Activated CD4-positive, alpha-beta T cell treated with anti-CD3 and anti-CD28 coated beads for 36 hours (primary cell): ENCODE measurements at regions of chr12 and their contacts with region 1.

Region 1: DNA sequence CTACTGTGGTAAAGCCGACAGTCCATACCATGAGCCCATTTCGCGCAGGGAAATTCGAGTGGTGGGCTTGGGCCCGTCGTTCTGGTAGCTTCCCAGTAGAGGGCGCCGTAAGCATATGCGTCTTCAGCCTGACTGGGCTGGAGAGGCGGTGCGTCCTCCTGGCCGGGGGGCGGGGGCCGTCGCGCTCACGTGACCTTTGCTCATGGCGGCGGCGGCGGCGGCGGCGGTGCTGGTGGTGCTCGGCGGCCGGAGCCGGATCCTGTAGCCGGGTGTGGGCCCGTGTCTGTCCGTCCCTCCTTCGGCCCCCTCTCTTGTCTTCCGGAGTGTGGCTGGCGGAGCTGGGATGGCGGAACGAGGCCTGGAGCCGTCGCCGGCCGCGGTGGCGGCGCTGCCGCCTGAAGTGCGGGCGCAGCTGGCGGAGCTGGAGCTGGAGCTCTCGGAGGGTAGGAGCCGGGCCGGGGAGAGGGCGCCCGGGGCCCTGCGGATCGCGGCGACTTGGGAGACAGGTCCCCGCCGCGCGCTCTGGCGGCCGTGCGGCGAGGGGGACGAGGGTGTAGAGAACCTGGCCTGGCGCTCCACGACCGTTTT is at the start of gene DIP2B:
- DNase-seq: peak; percentile 98
- ATAC-seq: peak; percentile 85
- H3K4me3 Mint-ChIP-seq: peak within 1 kb of the TSS; percentile 98
- H3K27ac Mint-ChIP-seq: peak within 1 kb of the TSS; percentile 96
- H3K4me1 Mint-ChIP-seq: peaks cover 43% of the 10 kb centered on the region
- H3K27me3 Mint-ChIP-seq: no peaks in the 10 kb centered on the region
- total RNA-seq, gene DIP2B: 29.2 to 29.4 TPM

Region 2: GRCh38 chr12:50400598-50401364 is 104.1 kb before region 1 on chr12 and contains the start of gene LARP4:
- CTCF ChIA-PET with region 1: no interaction called
- POLR2A ChIA-PET with region 1: no interaction called
- intact Hi-C with region 1: no loop called
- DNase-seq: peak; percentile 95
- ATAC-seq: peak; percentile 97
- H3K4me3 Mint-ChIP-seq: peak within 1 kb of the TSS; percentile 93
- H3K27ac Mint-ChIP-seq: peak within 1 kb of the TSS; percentile 94
- H3K4me1 Mint-ChIP-seq: peaks cover 13% of the 10 kb centered on the region
- H3K27me3 Mint-ChIP-seq: no peaks in the 10 kb centered on the region
- total RNA-seq, gene LARP4: 66.3 to 72.4 TPM

Region 3: GRCh38 chr12:50517456-50518048 is 12.7 kb after region 1 on chr12:
- CTCF ChIA-PET with region 1: interaction called, 9 read pairs
- POLR2A ChIA-PET with region 1: interaction called, 11 read pairs
- intact Hi-C with region 1: loop called (anchors 1 kb)
- DNase-seq: no peak
- ATAC-seq: peak; percentile 89
- H3K4me3 Mint-ChIP-seq: no peak overlapping the region
- H3K27ac Mint-ChIP-seq: no peak overlapping the region
- H3K4me1 Mint-ChIP-seq: peaks cover 37% of the 10 kb centered on the region
- H3K27me3 Mint-ChIP-seq: no peaks in the 10 kb centered on the region

Region 4: DNA sequence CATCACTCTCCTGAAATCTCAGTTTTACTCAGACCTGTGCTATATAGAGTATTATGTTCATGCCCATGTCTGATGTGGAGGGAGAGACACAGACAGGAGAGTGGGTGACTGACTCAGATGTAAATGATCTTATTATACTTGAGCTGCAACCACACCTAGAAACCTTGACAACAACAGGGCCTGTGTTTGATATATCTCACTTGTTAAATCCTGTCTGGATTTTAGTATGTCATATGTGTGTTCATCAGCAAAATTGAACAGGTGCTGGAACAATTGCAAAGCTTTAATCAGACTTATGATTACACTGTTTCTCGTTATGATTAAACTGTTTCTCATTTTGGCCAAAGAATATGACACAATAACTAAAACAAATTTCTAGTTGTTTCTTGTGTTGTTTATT is 37.6 kb after region 1 on chr12:
- CTCF ChIA-PET with region 1: interaction called, 12 read pairs
- POLR2A ChIA-PET with region 1: interaction called, 7 read pairs
- intact Hi-C with region 1: loop called (anchors 1 kb)
- DNase-seq: peak; percentile 59
- ATAC-seq: peak; percentile 98
- H3K4me3 Mint-ChIP-seq: no peak overlapping the region
- H3K27ac Mint-ChIP-seq: peak overlapping the region; percentile 92
- H3K4me1 Mint-ChIP-seq: peaks cover 61% of the 10 kb centered on the region
- H3K27me3 Mint-ChIP-seq: no peaks in the 10 kb centered on the region

Region 5: DNA sequence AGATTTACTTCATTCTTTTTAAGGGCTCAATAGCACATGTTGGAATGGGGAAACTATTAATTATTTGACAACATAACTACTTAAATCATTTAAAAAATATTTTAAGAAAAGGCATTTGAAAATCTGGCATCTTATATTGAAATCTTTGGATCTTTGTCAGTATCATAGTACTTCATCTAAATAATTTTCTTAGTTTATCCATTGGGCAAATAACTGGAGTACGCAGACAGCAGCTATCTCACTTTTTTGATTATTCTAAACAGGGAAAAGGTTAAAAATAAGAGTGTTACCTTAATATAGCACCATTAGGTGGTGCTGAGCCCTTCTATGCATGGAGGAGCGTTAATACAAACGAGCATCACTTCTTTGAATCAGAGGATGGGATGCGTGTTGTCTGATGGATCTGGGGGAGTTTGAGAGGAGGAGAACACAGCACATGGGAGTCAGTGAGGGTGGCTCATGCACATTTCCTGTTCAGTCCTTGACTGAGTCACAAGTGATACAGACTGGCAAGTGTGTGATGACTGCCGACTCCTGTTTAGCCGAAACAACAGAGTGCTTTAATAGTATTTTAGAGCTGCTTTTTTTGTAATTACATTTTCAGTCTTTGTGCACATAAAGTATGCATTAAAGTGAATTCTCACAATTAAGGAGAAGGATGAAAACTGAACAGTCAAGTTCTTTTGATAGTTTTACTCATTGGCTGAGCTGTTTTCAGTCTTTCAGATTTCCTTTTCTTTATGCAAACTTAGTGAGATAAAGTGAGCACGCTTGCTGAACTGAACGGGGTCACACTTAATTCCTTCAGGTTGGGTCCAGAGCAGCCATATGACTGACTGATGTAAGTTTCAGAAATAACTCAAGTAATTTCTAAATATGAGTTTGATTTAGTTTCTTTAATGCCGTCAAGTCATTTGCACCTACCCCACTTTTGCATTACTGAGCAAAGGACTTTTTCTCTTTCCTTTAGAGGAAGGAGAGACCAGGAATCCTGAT is 92.6 kb after region 1 on chr12:
- CTCF ChIA-PET with region 1: interaction called, 4 read pairs
- POLR2A ChIA-PET with region 1: no interaction called
- intact Hi-C with region 1: loop called in 1 of 2 experiments (anchors 1 kb)
- DNase-seq: peak; percentile 78
- ATAC-seq: peak; percentile 100
- H3K4me3 Mint-ChIP-seq: peak overlapping the region; percentile 44
- H3K27ac Mint-ChIP-seq: peak overlapping the region; percentile 90
- H3K4me1 Mint-ChIP-seq: peaks cover 45% of the 10 kb centered on the region
- H3K27me3 Mint-ChIP-seq: no peaks in the 10 kb centered on the region

Region 6: DNA sequence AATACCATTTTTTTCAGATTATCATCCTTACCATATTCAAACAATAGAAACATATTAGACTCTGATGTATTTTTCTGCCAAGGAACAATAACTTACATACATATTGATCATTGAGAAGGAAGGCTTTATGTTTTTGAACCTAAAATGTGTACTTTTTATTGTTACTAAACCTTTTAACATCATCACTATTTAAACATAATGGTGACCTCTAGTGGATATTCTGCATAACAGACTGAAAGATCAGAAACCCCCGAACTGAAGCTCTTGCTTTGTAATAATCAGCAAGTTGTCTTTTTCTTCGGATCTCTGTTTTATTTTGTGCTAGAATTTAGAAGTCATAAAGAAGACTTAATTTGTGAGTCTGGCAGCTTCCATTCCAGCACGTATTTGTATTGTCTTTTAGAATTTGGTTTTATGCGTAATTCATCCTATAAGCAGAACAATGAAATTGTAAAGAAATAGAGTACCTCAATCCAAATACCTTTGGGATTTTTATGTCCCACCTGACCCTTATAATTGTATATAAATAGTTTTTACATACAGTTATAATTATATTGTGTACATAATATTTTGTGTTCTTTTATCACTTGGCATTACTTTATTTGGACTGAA is 133.1 kb after region 1 on chr12:
- CTCF ChIA-PET with region 1: interaction called, 62 read pairs
- POLR2A ChIA-PET with region 1: interaction called, 5 read pairs
- intact Hi-C with region 1: loop called (anchors 1 kb)
- DNase-seq: no peak
- ATAC-seq: peak; percentile 42
- H3K4me3 Mint-ChIP-seq: no peak overlapping the region
- H3K27ac Mint-ChIP-seq: peak overlapping the region; percentile 49
- H3K4me1 Mint-ChIP-seq: peaks cover 44% of the 10 kb centered on the region
- H3K27me3 Mint-ChIP-seq: no peaks in the 10 kb centered on the region